GM13976 (cell line): ENCODE measurements at regions of chr3 and their contacts with region 1.

Region 1: GRCh38 chr3:31132132-31132769 is 237.8 kb upstream of the GADL1 start:
- DNase-seq: no peak
- CTCF ChIP-seq: no peak

Region 2: GRCh38 chr3:30779686-30780287 is 352.5 kb before region 1 on chr3:
- in situ Hi-C with region 1: loop called (anchors 25 kb)
- DNase-seq: peak; percentile 15
- CTCF ChIP-seq: peak; percentile 39